ENCODE measurements at regions of chr1 and their contacts with region 1.

Region 1: DNA sequence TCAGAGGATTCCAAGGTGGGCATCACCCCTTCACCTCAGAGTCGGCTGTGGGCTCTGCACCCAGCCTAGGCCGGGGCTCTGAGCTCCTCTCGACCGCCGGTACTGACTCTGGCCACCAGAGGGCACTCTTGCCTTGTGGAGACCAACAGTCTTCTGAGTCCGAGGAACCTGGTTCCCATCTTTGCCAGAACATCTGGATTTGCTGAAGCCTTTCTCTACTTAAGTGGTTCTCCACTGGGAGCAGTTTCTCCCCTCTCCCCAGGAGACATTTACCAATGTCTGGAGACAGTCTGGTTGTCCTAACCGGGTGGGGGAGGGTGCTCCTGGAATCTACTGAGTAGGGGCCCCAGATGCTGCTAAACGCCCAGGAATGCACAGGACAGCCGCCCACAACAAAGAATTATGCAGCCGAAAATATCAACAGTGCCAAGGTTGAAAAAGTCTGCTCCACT is 9.4 kb downstream of the ETV3L start:
- H3K4me3 ChIP-seq: no peak overlapping the region
- H3K27ac ChIP-seq: no peak overlapping the region
- H3K4me1 ChIP-seq: no peaks in the 10 kb centered on the region
- CTCF ChIP-seq: peak; percentile 81

Region 2: GRCh38 chr1:157073944-157074767 is 16.1 kb before region 1 on chr1:
- CTCF ChIA-PET with region 1: interaction called, 25 read pairs
- POLR2A ChIA-PET with region 1: no interaction called
- H3K4me3 ChIP-seq: no peak overlapping the region
- H3K27ac ChIP-seq: no peak overlapping the region
- H3K4me1 ChIP-seq: no peaks in the 10 kb centered on the region
- CTCF ChIP-seq: peak; percentile 57; the same call in 1 of the 2 replicates

Region 3: DNA sequence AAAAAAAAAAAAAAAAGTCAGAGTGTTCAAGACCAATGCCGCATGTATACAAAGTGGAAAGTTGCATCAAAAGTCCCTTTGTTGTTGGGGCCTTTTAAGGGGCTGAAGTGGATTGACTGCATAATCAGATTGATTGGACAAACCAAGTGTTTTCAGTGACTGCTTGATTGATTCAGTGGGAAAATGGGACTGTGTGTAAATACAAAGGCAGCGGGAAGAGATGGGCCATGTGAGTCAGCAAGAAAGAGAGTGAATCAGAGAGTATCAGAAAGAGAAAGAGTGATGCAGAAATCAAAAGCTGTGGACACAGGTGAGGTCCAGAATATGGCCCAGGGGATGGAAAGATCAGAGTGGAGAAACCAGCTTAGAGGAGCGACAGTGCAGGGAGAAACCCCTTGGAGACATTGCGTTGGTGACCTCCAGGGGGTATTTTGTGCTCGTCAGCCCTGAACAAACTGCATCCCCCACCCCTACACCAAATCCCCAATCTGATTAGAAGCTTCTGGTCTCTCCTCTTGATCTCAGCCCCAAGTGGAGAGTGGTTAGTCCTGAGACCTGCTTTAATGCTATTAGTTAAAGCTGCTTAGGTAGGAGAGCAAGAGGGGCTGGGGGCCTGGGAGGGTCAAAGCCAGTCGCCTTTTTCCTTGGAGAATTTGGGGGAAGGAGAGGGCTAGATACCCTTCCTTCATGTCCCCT is 14.5 kb after region 1 on chr1:
- CTCF ChIA-PET with region 1: interaction called, 24 read pairs
- POLR2A ChIA-PET with region 1: no interaction called
- H3K4me3 ChIP-seq: no peak overlapping the region
- H3K27ac ChIP-seq: no peak overlapping the region
- H3K4me1 ChIP-seq: no peaks in the 10 kb centered on the region
- CTCF ChIP-seq: no peak

Region 4: DNA sequence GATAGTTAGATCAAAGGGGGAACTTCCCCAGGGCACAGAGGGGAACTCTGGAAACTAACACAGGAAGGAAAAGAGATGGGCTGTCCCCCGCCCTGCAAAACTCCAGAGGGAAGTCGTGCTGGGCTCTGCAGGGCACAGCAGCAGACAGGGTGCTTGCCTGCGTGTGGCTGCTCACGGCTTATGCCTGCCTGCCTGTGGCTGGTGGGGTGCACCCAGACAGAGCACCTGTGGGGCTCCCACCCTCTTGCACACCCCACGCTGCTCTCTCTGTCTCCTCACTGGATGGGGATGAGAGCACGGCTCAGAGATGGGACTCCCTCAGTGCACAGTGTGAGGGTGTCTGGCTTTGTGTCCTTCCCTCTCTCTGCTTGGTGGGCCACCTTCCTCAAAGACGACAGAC is 22.9 kb after region 1 on chr1:
- CTCF ChIA-PET with region 1: interaction called, 11 read pairs
- POLR2A ChIA-PET with region 1: no interaction called
- H3K4me3 ChIP-seq: no peak overlapping the region
- H3K27ac ChIP-seq: no peak overlapping the region
- H3K4me1 ChIP-seq: no peaks in the 10 kb centered on the region
- CTCF ChIP-seq: no peak

Region 5: DNA sequence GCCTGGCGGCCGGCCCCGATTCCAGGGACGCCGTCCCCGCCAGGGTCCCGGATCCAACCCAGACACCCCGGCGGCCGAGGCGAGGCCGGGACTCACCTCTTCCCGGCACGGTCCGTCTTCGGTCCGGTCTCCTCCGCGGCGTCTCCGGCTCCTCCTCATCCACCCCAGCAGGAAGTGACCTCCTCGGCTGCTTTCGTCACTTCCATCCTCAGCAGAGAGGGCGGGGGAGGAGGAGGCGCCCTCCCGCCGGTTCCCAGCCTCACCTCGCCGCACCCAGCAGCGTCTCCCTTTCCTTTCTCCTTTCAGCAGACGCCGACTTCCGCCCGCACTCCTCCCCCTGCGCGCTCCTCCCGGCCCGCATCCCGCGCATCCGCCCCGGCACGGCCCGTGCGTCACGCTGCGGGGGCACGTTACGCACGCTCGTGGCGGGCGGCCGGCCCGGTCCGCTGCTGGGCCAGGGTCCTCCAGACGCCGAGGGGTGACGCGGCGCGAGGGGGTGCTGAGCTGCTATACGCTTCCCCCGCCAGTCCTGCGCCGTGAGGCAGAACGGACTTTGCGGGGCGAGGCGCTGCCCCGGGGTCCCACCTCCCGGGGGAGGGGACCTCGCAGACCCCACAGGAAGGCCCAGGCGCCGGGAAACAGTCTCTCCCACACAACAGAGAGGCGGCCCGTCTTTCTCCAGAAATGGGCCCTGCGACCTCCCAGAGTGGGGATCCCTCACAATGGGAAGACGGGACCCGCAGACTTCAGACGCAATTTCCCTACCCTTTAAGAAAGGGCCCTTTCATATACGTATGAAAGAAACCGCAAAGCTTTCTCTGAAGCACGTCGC is 48.2 kb after region 1 on chr1 and contains the start of gene ETV3:
- CTCF ChIA-PET with region 1: interaction called, 22 read pairs
- POLR2A ChIA-PET with region 1: no interaction called
- H3K4me3 ChIP-seq: peak within 1 kb of the TSS; percentile 71
- H3K27ac ChIP-seq: peak within 1 kb of the TSS; percentile 89
- H3K4me1 ChIP-seq: peaks cover 6% of the 10 kb centered on the region
- CTCF ChIP-seq: no peak

Region 6: DNA sequence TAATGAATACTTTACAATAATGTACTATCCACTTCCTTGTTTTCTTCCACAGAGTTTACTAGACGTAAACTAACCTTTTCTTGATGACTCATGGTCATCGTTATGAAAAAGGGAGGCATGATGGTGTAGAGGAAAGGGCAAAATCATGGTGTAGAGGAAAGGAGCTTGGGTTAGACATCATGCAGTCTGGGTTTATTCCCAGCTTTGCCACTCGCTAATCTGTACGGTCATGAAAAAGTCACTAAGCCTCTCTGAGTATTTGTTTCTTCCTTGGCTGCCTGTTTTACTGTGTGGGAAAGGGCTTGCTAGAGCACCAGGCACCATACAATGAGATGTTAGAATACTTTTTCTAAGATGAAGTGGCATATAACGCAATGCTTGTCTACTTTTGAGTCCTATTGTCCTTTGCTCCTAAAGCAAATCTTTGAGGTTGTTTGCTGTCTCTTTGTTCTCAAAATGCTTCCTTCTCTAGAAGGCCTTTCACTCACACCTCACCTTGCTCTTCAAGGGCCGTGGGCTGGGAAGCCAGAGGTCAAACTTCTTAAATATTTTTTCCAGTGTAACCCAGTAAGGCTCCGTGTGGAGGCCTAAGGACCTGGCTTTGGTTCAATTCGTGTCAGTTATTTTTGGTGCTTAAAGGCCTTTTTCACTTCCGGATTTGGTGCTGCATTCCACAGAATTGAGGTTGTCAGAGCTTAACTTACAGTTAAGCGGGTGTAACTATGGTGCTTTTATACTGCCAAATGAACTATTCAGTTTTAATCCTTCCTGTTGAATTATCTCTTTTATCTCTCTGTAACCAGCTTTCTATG is 57.9 kb after region 1 on chr1:
- CTCF ChIA-PET with region 1: interaction called, 288 read pairs
- POLR2A ChIA-PET with region 1: no interaction called
- H3K4me3 ChIP-seq: no peak overlapping the region
- H3K27ac ChIP-seq: no peak overlapping the region
- H3K4me1 ChIP-seq: no peaks in the 10 kb centered on the region
- CTCF ChIP-seq: no peak

Region 7: GRCh38 chr1:157156058-157156541 is 65.9 kb after region 1 on chr1:
- CTCF ChIA-PET with region 1: interaction called, 288 read pairs
- POLR2A ChIA-PET with region 1: interaction called, 5 read pairs
- H3K4me3 ChIP-seq: peak overlapping the region; percentile 29
- H3K27ac ChIP-seq: no peak overlapping the region
- H3K4me1 ChIP-seq: no peaks in the 10 kb centered on the region; the same call in 1 of the 2 replicates
- CTCF ChIP-seq: peak; percentile 97

Measured in HEK293 (cell line).